Heart right ventricle (tissue), 16 donors: ENCODE measurements at regions of chr1 and their contacts with region 1.

Region 1: DNA sequence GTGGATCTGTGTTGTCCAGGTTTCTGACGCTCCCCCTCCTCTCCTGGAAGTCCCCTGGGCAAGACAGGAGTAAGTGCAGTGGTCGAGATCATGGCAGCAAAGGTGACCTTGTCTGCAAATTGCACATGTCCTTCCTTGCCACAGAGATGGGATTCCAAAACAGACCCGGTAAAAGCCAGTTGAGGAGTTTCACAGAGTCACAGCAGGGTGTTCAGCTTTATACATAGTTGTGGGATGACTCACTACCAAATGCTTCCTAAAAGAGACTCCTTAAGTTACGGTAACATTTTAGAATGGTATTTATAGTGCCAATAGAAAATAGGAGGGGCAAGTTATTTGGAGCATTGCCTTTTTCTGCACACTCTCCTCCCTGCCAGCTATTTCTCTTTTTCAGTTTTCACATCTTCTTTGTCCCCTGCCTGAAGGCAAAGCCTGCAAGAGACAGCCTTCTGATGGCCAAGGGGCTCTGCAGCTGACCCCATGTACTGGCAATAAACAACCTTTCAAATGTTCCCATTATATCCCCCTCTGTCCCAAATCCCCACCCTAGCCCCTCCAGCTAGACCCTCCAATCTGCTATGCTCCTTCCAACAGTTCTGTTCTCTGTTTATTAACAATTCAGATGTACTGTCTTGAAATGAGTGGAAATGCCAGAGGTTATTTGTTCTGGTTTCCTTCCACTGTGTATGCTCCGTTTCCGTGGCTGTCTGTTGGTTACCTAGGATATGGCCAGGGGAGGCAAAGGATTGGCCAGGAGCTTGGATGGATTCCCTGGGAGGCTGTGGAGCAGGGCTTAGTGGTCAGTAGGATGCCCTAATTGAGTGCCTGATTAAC is 115.0 kb downstream of the TGFB2 start:
- DNase-seq: peak in 1 of 2 donors; percentile 60
- ATAC-seq: peak; percentile 50 to 90 (median 88)
- H3K4me3 ChIP-seq: peak overlapping the region in 5 of 10 donors; percentile 5 to 22 (median 13)
- H3K27ac ChIP-seq: peak overlapping the region; percentile 34 to 90 (median 74)
- H3K4me1 ChIP-seq: peaks cover 14 to 55% (median 47%) of the 10 kb centered on the region in 9 donors
- H3K27me3 ChIP-seq: no peaks in the 10 kb centered on the region
- CTCF ChIP-seq: no peak

Region 2: GRCh38 chr1:218209351-218209861 is 250.7 kb before region 1 on chr1:
- intact Hi-C with region 1: no loop called
- DNase-seq: no peak
- ATAC-seq: no peak
- H3K4me3 ChIP-seq: no peak overlapping the region
- H3K27ac ChIP-seq: no peak overlapping the region
- H3K4me1 ChIP-seq: no peaks in the 10 kb centered on the region
- H3K27me3 ChIP-seq: peaks cover 0 to 29% (median 6%) of the 10 kb centered on the region in 7 donors
- CTCF ChIP-seq: no peak

Region 3: DNA sequence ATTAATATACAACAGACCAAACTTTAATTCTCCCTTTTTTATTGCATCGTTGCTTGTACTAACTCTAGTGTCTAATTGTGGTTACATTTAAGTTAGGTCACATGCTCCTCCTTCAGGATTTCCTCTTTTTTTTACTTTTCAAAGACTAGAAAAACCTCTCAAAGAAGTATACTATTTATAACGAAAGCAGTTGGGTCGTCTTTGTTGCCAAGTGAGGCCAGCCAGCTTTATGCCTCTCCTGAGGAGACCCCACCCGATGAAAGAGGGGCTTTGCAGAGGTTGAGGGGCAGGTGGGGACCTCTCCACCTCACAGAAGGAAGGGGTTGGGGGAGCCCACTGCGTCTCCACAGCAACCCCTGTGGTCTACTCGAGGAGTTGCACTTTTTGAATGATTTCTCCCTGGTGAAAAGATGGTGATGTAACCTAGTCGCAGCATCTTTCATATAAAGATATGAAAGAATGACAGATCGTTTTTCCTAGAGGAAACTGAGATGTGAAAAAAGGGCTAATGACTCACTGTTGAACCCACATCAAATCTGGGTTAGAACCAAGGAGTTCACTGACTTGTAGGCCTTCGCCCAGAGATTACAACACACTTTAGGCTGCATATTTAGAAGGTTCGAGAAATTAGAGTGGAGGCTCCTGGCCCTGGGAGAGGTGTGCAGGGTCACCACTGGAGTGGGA is 108.6 kb before region 1 on chr1:
- intact Hi-C with region 1: loop called in 4 of 10 experiments (anchors 5 to 10 kb)
- DNase-seq: peak in 1 of 2 donors; percentile 29
- ATAC-seq: peak in 5 of 8 donors; percentile 16 to 76 (median 28)
- H3K4me3 ChIP-seq: peak overlapping the region in 8 of 10 donors; percentile 5 to 84 (median 54)
- H3K27ac ChIP-seq: peak overlapping the region in 9 of 10 donors; percentile 41 to 95 (median 72)
- H3K4me1 ChIP-seq: peaks cover 0 to 57% (median 16%) of the 10 kb centered on the region in 9 donors
- H3K27me3 ChIP-seq: peaks cover 0 to 19% (median 0%) of the 10 kb centered on the region in 7 donors
- CTCF ChIP-seq: peak in 8 of 9 donors; percentile 8 to 61 (median 45)

Region 4: GRCh38 chr1:218529646-218530310 is 69.7 kb after region 1 on chr1:
- intact Hi-C with region 1: no loop called
- DNase-seq: no peak
- ATAC-seq: peak in 1 of 8 donors; percentile 27
- H3K4me3 ChIP-seq: no peak overlapping the region
- H3K27ac ChIP-seq: no peak overlapping the region
- H3K4me1 ChIP-seq: no peaks in the 10 kb centered on the region
- H3K27me3 ChIP-seq: no peaks in the 10 kb centered on the region
- CTCF ChIP-seq: no peak

Region 5: DNA sequence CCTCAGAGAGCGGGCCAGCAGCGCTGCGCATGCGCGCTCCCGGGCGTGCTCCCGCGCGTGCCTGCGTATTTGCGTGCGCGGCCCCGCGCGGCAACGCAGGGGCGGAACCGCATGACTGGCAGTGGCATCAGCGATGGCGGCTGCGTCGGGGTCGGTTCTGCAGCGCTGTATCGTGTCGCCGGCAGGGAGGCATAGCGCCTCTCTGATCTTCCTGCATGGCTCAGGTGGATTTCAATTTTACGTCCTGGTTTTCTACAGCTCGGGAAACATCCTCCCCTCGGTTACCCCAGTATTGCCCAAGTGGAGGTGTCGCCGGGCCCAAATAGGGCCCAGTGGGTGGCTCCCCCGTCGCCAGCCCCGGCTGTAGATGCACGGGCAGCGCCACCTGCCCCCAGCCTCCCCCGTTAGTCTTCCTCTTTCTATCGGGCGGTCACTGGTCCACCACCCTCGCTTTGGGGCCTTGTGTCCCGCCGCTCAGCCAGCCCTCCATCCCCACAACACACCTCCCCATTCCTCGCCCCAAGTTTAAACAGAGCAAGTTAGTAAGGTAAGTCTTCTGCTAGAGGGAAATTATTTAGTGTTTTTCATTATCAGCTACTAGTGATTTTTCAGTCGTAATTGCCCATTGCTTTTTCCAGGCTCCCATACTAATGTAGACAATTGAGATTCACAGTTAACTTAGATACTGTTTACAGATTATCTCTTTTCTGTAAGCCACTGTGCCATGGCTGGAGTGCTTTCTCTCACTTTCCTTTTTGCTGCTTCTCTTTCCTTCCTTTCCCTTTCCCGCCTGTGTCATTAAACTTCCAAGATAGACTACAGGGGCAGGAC is 713.9 kb after region 1 on chr1 and contains the start of gene LYPLAL1:
- intact Hi-C with region 1: loop called in 1 of 10 experiments (anchors 10 kb)
- DNase-seq: peak; percentile 89 to 93
- ATAC-seq: peak; percentile 94 to 98 (median 96)
- H3K4me3 ChIP-seq: peak within 1 kb of the TSS; percentile 63 to 90 (median 78)
- H3K27ac ChIP-seq: peak within 1 kb of the TSS; percentile 72 to 95 (median 92)
- H3K4me1 ChIP-seq: peaks cover 0 to 67% (median 41%) of the 10 kb centered on the region in 9 donors
- H3K27me3 ChIP-seq: no peaks in the 10 kb centered on the region
- CTCF ChIP-seq: peak in 5 of 9 donors; percentile 12 to 42 (median 25)
- total RNA-seq, gene LYPLAL1: 65.9 to 186 (median 120) TPM